Motor neuron (in vitro differentiated cells): ENCODE measurements at regions of chr1 and their contacts with region 1.

Region 1: GRCh38 chr1:121519042-121519755 is 334.4 kb downstream of the SRGAP2C start:
- ATAC-seq: peak; percentile 90 to 97 (median 94)
- H3K4me3 ChIP-seq: peak overlapping the region; percentile 48 to 71 (median 56)
- H3K27ac ChIP-seq: peak overlapping the region; percentile 69 to 73
- H3K4me1 ChIP-seq: peaks cover 4% of the 10 kb centered on the region in 2 donors

Region 2: DNA sequence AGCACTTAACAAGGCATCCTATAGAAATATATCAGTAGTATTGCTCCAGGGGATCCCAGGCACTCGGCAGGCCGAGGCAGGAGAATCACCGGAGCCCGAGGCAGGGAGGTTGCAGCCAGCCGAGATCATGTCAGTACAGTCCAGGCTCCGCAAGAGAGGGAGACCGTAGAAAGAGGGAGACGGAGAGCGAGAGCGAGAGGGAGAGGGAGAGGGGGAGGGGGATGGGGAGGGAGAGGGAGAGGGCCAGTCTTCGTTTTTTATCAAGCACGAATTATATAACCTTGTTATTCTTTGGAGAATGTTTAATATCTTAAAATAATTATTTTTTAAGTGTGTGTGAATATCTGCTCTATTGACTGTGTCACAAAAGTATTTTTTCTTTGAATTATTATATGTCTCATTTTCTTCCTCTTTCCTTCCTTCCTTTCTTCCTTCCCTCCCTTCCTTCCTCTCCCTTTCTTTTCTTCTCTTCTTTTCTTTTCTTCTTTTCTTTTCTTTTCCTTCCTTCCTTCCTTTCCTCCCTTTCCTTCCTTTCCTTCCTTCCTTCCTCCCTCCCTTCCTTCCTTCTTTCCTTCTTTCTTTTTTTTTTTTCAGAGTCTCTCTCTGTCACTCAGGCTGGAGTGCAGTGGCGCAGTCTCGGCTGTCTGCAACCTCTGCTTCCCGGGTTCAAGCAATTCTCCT is 100.7 kb before region 1 on chr1:
- in situ Hi-C with region 1: loop called in 1 of 9 experiments (anchors 25 kb)
- ATAC-seq: peak in 1 of 8 experiments; percentile 53
- H3K4me3 ChIP-seq: no peak overlapping the region
- H3K27ac ChIP-seq: no peak overlapping the region
- H3K4me1 ChIP-seq: no peaks in the 10 kb centered on the region

Region 3: DNA sequence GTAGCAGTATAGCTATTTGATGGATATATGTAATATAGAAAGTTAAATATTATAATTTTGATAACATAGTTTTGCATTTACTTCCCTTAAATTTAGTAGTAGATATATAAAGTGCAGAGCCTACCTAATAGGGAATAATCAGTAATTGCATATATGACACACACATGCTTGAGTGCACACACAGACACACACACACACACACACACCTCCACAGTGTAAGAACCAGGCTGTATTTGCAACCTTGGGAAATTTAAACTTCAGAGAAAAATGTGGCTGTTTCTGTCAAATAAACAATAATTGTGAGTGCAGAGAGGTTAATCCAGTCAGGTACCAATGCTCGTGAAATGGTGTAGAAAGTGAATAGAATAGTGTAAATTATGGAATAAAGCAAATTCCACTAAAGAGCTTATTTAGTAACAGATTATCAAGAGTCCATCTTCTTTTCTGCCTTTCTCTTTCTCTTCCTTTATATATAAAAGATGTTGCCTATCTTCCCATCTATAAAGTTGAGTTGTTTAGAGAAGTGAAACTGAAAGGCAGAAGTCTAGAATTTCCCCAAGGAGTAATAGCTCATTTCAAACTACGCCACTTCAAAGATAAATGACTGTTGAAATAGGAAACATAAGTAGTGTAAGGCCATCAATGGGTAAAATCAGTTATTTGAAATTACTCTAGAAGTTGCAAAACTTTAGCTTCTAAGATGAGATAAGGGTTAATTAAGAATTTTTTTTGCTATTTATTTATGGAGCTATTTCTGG is 60.7 kb before region 1 on chr1:
- in situ Hi-C with region 1: no loop called
- ATAC-seq: peak in 1 of 8 experiments; percentile 13
- H3K4me3 ChIP-seq: no peak overlapping the region
- H3K27ac ChIP-seq: no peak overlapping the region
- H3K4me1 ChIP-seq: no peaks in the 10 kb centered on the region